CD14-positive monocyte (primary cell): ENCODE measurements at regions of chr13 and their contacts with region 1.

Region 1: GRCh38 chr13:76886292-76887075 is at the start of gene KCTD12:
- DNase-seq: peak; percentile 77 to 86 (median 83)
- H3K4me3 ChIP-seq: peak within 1 kb of the TSS; percentile 91 to 97 (median 96)
- H3K4me3 Mint-ChIP-seq: peak within 1 kb of the TSS; percentile 98 to 99
- H3K27ac ChIP-seq: peak within 1 kb of the TSS; percentile 96
- H3K27ac Mint-ChIP-seq: peak within 1 kb of the TSS; percentile 96 to 99 (median 97)
- H3K4me1 ChIP-seq: peaks cover 13 to 19% of the 10 kb centered on the region in 2 donors
- H3K4me1 Mint-ChIP-seq: peaks cover 28% of the 10 kb centered on the region
- H3K27me3 ChIP-seq: peaks cover 0 to 5% of the 10 kb centered on the region in 2 donors
- H3K27me3 Mint-ChIP-seq: peaks cover 8 to 11% (median 10%) of the 10 kb centered on the region in 3 donors
- CTCF ChIP-seq: peak; percentile 17
- polyA plus RNA-seq, gene KCTD12: 30.9 to 67.1 (median 31.2) TPM

Region 2: DNA sequence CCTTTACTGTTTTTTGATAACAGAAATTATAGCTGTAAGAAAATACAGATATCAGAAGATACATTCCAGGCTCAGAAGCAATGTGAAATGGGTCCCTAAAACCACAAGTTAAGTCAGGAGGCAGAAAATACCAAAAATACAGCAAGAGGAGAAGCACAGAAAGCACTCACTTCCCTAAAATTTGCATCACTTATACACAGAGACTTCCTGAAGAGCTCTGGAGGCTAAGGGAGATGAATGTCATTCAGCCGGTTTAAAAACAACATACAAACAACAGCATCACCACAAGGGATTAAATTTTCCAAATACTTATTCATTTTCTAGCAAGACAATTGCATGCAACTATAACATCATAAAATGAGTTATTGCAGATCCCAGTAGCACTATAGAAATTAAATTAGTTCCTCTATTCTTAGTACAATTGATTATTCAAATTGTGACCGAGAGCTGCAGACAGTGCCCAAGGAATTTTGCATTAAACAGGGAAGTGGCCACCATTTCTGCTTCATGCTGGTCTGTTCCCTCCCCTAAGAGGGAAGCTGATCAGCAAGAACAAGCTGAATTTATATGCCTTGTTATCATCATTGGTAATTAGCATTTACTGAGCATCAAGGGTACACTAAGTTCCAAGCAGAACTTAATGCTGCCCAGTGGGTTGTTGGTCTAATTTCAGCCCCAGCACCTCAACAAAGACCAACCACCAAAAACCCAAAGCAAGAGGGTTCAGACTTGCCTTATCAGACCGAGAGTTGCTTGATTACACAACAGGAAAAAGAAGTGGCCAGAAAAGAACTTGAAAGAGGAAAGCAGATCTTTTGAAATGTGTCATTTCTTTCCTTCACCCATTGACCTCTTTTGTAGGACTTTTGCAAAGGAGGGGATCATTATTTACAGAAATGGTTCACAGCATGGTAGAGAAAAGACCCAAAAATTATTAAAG is 141.0 kb before region 1 on chr13:
- intact Hi-C with region 1: loop called (anchors 5 to 10 kb)
- DNase-seq: peak; percentile 64 to 78 (median 77)
- H3K4me3 ChIP-seq: peak overlapping the region in 2 of 3 experiments; percentile 33 to 69
- H3K4me3 Mint-ChIP-seq: peak overlapping the region; percentile 49 to 66
- H3K27ac ChIP-seq: peak overlapping the region; percentile 84 to 86
- H3K27ac Mint-ChIP-seq: peak overlapping the region; percentile 85 to 95 (median 91)
- H3K4me1 ChIP-seq: peaks cover 62 to 67% of the 10 kb centered on the region in 2 donors
- H3K4me1 Mint-ChIP-seq: peaks cover 31% of the 10 kb centered on the region
- H3K27me3 ChIP-seq: no peaks in the 10 kb centered on the region
- H3K27me3 Mint-ChIP-seq: no peaks in the 10 kb centered on the region
- CTCF ChIP-seq: no peak

Region 3: GRCh38 chr13:76799696-76800095 is 86.8 kb before region 1 on chr13:
- intact Hi-C with region 1: loop called (anchors 5 to 10 kb)
- DNase-seq: peak; percentile 66 to 81 (median 71)
- H3K4me3 ChIP-seq: no peak overlapping the region
- H3K4me3 Mint-ChIP-seq: no peak overlapping the region
- H3K27ac ChIP-seq: peak overlapping the region; percentile 42 to 60
- H3K27ac Mint-ChIP-seq: peak overlapping the region; percentile 82 to 95 (median 91)
- H3K4me1 ChIP-seq: peaks cover 49 to 52% of the 10 kb centered on the region in 2 donors
- H3K4me1 Mint-ChIP-seq: peaks cover 46% of the 10 kb centered on the region
- H3K27me3 ChIP-seq: no peaks in the 10 kb centered on the region
- H3K27me3 Mint-ChIP-seq: no peaks in the 10 kb centered on the region
- CTCF ChIP-seq: no peak

Region 4: GRCh38 chr13:76937281-76937820 is 50.9 kb after region 1 on chr13:
- intact Hi-C with region 1: loop called in 1 of 2 experiments (anchors 5 kb)
- DNase-seq: peak; percentile 78 to 96 (median 89)
- H3K4me3 ChIP-seq: no peak overlapping the region
- H3K4me3 Mint-ChIP-seq: no peak overlapping the region
- H3K27ac ChIP-seq: peak overlapping the region; percentile 45 to 62
- H3K27ac Mint-ChIP-seq: peak overlapping the region; percentile 41 to 94 (median 83)
- H3K4me1 ChIP-seq: peaks cover 35 to 41% of the 10 kb centered on the region in 2 donors
- H3K4me1 Mint-ChIP-seq: peaks cover 39% of the 10 kb centered on the region
- H3K27me3 ChIP-seq: no peaks in the 10 kb centered on the region
- H3K27me3 Mint-ChIP-seq: peaks cover 1 to 4% (median 2%) of the 10 kb centered on the region in 3 donors
- CTCF ChIP-seq: no peak

Region 5: GRCh38 chr13:77329133-77329910 is 442.8 kb after region 1 on chr13:
- intact Hi-C with region 1: loop called in 1 of 2 experiments (anchors 10 kb)
- DNase-seq: peak; percentile 86 to 88 (median 87)
- H3K4me3 ChIP-seq: peak overlapping the region; percentile 78 to 98 (median 88)
- H3K4me3 Mint-ChIP-seq: peak overlapping the region; percentile 97 to 98
- H3K27ac ChIP-seq: peak overlapping the region; percentile 82 to 91
- H3K27ac Mint-ChIP-seq: peak overlapping the region; percentile 91 to 96 (median 94)
- H3K4me1 ChIP-seq: peaks cover 36 to 55% of the 10 kb centered on the region in 2 donors
- H3K4me1 Mint-ChIP-seq: peaks cover 45% of the 10 kb centered on the region
- H3K27me3 ChIP-seq: no peaks in the 10 kb centered on the region
- H3K27me3 Mint-ChIP-seq: no peaks in the 10 kb centered on the region
- CTCF ChIP-seq: no peak